Left ventricle myocardium superior (tissue), 1 donor: ENCODE measurements at regions of chr3 and their contacts with region 1.

Region 1: GRCh38 chr3:152444029-152444641 is 175.4 kb downstream of the MBNL1 start:
- DNase-seq: no peak
- ATAC-seq: peak; percentile 68

Region 2: DNA sequence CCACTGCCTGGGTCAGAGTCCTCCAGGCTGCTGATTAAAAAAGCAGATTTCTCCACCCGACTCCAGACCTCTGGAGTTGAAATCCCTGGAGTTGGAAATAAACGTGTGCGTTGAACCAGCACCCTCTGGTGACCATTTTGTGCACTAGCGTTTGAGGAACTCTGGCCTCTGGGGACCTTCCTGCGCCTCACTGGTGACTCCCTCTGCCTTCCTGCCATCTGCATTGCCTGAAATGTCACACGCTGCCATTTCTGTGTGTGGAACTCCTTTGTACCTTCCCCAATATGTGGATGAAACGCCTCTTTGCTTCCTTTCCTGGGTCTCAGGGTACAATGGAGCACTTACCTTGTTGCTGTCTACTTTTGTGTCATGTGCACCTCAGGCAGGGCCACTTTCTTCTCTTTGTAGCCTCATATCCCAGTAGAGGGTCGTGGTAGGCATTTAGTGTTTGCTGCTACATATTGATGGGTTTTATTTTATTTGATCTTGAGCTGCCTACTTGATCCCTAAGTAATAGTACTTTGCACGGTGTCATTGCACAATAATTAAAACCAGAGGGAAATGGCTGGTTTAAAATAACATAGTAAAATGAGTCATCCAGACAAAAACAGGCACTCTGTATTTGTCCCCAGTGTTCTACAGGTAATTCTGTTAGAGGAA is 1297.9 kb before region 1 on chr3:
- intact Hi-C with region 1: no loop called
- DNase-seq: peak; percentile 63
- ATAC-seq: peak; percentile 97

Region 3: GRCh38 chr3:152183473-152183872 is 260.7 kb before region 1 on chr3:
- intact Hi-C with region 1: loop called (anchors 10 kb)
- DNase-seq: peak; percentile 37
- ATAC-seq: peak; percentile 84

Region 4: GRCh38 chr3:152222327-152222726 is 221.8 kb before region 1 on chr3:
- intact Hi-C with region 1: loop called (anchors 10 kb)
- DNase-seq: no peak
- ATAC-seq: peak; percentile 64

Region 5: DNA sequence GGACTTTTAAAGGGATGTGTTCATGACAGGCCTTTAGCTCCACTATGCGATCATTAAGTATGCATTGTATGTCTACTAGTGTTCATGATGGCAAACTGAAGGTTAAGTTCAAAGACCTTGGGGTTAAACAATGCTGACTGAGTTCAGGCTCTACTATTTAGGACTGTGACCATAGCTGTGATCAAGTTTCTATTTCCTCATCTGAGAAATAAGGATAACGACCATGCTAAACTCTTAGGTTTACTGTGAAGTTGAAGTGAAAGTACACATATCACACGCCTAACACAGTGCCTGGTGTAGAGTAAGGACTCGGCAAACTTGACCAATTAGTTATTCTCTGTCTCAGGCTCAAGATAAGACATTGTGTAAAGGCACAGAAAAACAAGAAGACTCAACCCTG is 67.8 kb after region 1 on chr3:
- intact Hi-C with region 1: no loop called
- DNase-seq: no peak
- ATAC-seq: no peak